ENCODE measurements at regions of chr19 and their contacts with region 1.

Region 1: GRCh38 chr19:12052497-12053169 is at the start of gene ZNF878:
- DNase-seq: peak; percentile 94
- ATAC-seq: peak; percentile 100
- H3K4me3 ChIP-seq: peak within 1 kb of the TSS; percentile 63
- H3K27ac ChIP-seq: peak within 1 kb of the TSS; percentile 63
- H3K4me1 ChIP-seq: peaks cover 9% of the 10 kb centered on the region
- H3K27me3 ChIP-seq: no peaks in the 10 kb centered on the region
- CTCF ChIP-seq: no peak
- total RNA-seq, gene ZNF878: not detected

Region 2: DNA sequence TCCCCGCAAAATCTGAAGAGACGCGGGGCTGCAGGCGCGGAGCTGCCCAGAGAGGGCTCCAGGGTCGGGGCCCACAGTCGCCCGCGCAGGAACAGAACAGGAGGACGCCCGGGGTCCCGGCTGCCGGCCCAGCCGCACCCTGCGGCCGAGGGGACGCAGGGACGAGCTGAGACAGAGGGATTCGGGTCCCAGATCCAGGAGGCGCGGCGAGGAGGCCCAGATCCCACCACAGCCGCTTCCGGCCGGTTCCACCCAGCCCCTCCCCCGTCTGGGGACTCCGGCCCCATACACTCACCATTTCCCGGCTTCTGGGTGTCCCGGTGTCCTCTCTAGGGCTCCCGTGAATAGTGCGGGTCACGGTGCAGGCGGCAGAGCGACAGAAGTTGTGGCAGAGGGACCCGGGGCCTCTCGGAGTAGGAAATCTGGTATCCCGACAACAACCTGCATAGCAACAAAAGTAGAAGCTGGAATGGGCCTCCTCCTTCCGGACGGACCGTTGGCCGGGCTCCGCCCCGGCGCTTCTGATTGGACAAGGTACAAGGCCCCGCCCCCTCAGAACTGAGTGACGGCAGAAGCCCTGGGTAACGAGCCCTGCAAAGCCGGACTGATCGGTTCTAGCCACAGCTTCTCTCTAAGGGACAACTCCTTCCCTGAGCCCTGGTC is 87.4 kb after region 1 on chr19 and contains the start of gene ZNF20:
- intact Hi-C with region 1: loop called (anchors 10 kb)
- DNase-seq: peak; percentile 98
- ATAC-seq: peak; percentile 98
- H3K4me3 ChIP-seq: peak within 1 kb of the TSS; percentile 75
- H3K27ac ChIP-seq: peak within 1 kb of the TSS; percentile 87
- H3K4me1 ChIP-seq: peaks cover 20% of the 10 kb centered on the region
- H3K27me3 ChIP-seq: no peaks in the 10 kb centered on the region
- CTCF ChIP-seq: no peak
- total RNA-seq, gene ZNF20: 3.3 TPM

Measured in upper lobe of right lung (tissue), 1 donor.